Mucosa of descending colon (tissue), 3 donors: ENCODE measurements at regions of chr13 and their contacts with region 1.

Region 1: DNA sequence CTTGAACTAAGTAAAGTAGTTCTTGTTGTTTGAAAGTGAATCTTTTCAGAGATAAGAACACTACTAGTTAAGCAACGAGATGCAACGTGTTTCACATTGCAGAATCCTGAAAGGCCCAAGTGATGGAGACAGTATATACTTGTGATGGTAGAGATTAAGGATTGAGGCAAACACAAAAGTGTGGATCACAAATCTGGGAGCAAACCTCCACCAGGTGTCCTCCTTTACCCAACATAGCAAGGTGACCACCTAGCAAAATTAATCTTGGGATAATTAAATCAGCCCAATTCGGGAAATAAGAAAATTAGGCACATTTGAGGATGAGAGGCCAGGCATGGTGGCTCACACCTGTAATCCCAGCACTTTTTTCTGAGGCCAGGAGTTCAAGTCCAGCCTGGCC is 563.9 kb downstream of the DACH1 start:
- DNase-seq: peak in 1 of 3 donors; percentile 22
- ATAC-seq: no peak
- H3K4me3 ChIP-seq: no peak overlapping the region
- H3K4me1 ChIP-seq: no peaks in the 10 kb centered on the region
- CTCF ChIP-seq: no peak

Region 2: GRCh38 chr13:71350886-71351285 is 47.7 kb after region 1 on chr13:
- intact Hi-C with region 1: no loop called
- DNase-seq: no peak
- ATAC-seq: no peak
- H3K4me3 ChIP-seq: no peak overlapping the region
- H3K4me1 ChIP-seq: no peaks in the 10 kb centered on the region
- CTCF ChIP-seq: no peak

Region 3: DNA sequence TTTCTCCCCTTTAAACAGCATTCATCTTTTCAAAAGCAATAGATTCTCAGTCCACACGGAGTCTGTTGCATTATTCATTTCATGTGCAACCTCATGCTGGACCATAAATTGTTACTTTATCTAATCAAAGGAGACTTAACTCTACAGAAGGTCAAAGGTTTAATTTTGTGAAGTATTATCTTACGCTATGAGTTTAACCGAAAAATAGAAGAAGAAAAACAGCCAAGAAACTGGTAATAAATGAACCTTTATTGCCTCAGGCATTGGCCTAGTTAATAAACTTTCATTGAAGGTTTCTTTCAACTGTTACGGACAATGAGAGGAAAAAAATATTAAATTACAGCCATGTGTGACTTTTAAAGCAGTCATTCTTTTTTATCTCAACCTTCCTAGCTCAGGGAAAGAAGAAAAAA is 340.3 kb after region 1 on chr13:
- intact Hi-C with region 1: no loop called
- DNase-seq: no peak
- ATAC-seq: no peak
- H3K4me3 ChIP-seq: no peak overlapping the region
- H3K4me1 ChIP-seq: no peaks in the 10 kb centered on the region
- CTCF ChIP-seq: no peak

Region 4: DNA sequence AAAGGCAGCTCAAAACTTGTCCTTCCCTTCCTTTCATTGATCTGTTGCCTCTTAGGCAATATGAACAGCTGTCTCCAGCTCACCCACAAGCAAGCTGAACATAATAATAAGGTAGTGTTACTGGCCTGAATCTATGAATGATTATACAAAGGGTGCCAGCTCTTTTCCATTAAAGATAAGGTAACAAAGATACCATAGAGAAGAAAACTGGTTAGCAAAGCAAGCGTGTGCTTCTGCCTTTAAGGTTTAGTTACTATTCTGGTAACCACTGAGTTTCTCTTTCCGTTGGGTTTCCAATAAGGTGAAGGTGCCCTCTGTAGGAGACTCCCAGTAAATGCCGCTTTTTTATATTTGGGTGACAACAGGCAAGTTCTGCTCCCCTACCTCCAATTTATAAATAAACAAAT is 576.0 kb after region 1 on chr13:
- intact Hi-C with region 1: loop called in 1 of 2 experiments (anchors 10 kb)
- DNase-seq: peak in 1 of 3 donors; percentile 50
- ATAC-seq: peak; percentile 84
- H3K4me3 ChIP-seq: no peak overlapping the region
- H3K4me1 ChIP-seq: peaks cover 3% of the 10 kb centered on the region
- CTCF ChIP-seq: peak; percentile 36